Mammary epithelial cell (primary cell): ENCODE measurements at regions of chr6 and their contacts with region 1.

Region 1: DNA sequence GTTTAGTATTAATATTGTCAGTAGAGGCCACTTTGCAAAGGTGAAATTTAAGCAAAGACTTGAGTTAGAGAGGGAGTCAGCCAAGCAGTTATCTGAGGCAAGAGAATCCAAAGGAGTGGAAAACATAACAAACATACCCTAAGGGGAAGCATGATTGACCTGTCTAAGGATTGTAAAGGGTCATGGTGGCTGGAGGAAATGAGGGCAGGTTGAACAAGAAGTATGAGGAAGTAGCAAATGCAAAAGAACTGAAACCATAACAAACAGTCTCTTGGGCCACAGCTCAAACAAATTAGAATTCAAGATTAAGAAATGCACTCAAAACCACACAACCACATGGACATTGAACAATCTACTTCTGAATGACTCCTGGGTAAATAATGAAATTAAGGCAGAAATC is 103.2 kb downstream of the FBXO5 start:
- DNase-seq: no peak
- H3K4me3 ChIP-seq: no peak overlapping the region
- H3K27ac ChIP-seq: no peak overlapping the region
- H3K4me1 ChIP-seq: no peaks in the 10 kb centered on the region
- H3K27me3 ChIP-seq: no peaks in the 10 kb centered on the region
- CTCF ChIP-seq: no peak

Region 2: GRCh38 chr6:152932865-152933264 is 53.2 kb after region 1 on chr6:
- CTCF ChIA-PET with region 1: no interaction called
- dilution Hi-C with region 1: loop called (anchors 5 kb)
- in situ Hi-C with region 1: no loop called
- intact Hi-C with region 1: no loop called
- DNase-seq: no peak
- H3K4me3 ChIP-seq: no peak overlapping the region
- H3K27ac ChIP-seq: no peak overlapping the region
- H3K4me1 ChIP-seq: no peaks in the 10 kb centered on the region
- H3K27me3 ChIP-seq: no peaks in the 10 kb centered on the region
- CTCF ChIP-seq: no peak